Activated CD4-positive, alpha-beta T cell treated with anti-CD3 and anti-CD28 coated beads, Interleukin-2, amount 10 ng/mL, durations not matched to agents 7 days and 5 days (primary cell): ENCODE measurements at regions of chr1 and their contacts with region 1.

Region 1: DNA sequence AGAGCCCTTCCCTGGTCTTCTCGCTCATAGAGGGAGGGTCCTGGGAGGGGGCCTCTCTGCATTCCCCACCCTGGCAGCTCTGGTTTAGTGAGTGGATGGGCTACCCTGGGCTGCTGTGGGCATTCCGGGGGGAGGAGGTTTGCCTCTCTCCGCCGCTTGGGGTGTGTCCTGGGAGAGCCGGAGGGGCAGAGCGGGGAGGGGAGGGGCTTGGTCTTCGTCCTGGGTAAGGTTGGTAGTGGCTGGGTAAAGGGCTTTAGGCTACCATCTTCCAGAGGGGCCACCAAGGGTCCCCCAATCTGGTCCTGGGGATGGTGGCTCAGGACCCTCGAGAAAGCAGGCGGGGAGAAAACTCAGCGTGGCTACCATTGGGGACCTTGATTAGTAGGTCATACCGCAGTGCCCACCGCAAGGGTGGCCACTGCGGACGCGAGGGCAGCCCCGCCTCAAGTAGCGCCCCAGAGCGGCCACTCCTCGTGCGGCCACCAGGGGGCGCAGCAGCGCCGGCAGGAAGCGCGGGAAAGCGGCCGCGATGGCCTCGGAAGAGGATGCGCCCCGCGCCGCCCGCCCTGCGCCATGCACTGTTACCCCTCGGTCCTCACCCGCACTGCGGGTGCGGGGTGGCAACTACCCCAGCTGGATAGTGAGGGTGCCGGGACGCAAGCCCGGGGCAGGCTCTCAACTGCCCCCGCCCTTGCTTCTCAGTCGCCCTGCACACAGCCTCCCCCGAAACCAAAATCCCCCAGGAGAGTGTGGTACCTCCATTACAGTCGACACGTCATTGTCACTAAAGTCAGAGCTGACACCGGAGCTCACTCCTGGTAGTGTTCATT is 44.1 kb upstream of the SLC25A33 start:
- DNase-seq: peak; percentile 57
- H3K4me3 Mint-ChIP-seq: peak overlapping the region; percentile 44
- H3K27ac Mint-ChIP-seq: peak overlapping the region; percentile 61
- H3K4me1 Mint-ChIP-seq: peaks cover 12% of the 10 kb centered on the region
- H3K27me3 Mint-ChIP-seq: peaks cover 1% of the 10 kb centered on the region

Region 2: GRCh38 chr1:9269078-9269501 is 226.1 kb before region 1 on chr1:
- CTCF ChIA-PET with region 1: interaction called, 15 read pairs
- POLR2A ChIA-PET with region 1: no interaction called
- DNase-seq: no peak
- H3K4me3 Mint-ChIP-seq: no peak overlapping the region
- H3K27ac Mint-ChIP-seq: no peak overlapping the region
- H3K4me1 Mint-ChIP-seq: peaks cover 15% of the 10 kb centered on the region
- H3K27me3 Mint-ChIP-seq: no peaks in the 10 kb centered on the region

Region 3: DNA sequence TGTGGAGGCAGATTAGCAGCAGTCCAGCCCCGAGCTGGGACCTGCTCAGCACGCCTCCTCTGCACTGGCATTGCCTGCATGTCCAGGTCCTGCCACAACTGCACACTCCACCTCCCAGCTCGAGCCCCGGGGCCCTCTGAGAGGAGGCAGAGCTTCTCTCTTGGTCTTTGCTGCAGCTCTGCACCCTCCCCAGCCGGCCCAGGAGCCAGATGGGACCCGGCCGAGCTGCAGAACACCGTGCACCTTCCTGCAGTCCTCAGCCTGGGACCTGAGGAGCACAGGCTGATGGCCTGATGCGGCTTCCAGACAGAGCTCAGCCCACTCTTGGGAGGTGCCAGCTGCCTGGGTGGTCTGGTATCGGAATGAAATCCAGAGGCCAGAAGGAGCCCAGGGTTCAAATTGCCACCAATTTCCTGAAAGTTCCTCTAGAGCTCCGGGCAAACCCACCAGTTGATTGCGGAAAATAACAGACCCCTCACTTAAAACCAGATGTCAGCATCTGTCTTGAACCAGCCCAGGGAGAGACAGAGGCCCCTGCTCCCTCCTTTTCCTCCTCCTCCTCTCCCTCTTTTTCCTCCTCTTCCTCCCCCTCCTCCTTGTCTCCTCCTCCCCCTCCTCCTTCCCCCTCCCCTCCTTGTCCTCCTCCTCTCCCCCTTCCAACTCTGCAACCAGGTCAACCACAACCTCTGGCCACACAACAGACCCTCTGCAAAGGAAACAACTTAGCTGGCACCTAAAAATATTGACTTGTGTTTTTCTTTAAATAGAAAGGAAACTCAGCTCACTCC is 213.0 kb before region 1 on chr1:
- CTCF ChIA-PET with region 1: interaction called, 22 read pairs
- POLR2A ChIA-PET with region 1: no interaction called
- DNase-seq: no peak
- H3K4me3 Mint-ChIP-seq: no peak overlapping the region
- H3K27ac Mint-ChIP-seq: peak overlapping the region; percentile 91
- H3K4me1 Mint-ChIP-seq: peaks cover 73% of the 10 kb centered on the region
- H3K27me3 Mint-ChIP-seq: peaks cover 3% of the 10 kb centered on the region

Region 4: GRCh38 chr1:9289090-9289534 is 206.0 kb before region 1 on chr1:
- CTCF ChIA-PET with region 1: interaction called, 18 read pairs
- POLR2A ChIA-PET with region 1: interaction called, 4 read pairs
- DNase-seq: peak; percentile 87
- H3K4me3 Mint-ChIP-seq: no peak overlapping the region
- H3K27ac Mint-ChIP-seq: no peak overlapping the region
- H3K4me1 Mint-ChIP-seq: peaks cover 37% of the 10 kb centered on the region
- H3K27me3 Mint-ChIP-seq: no peaks in the 10 kb centered on the region

Region 5: GRCh38 chr1:9822490-9822889 is 327.3 kb after region 1 on chr1:
- CTCF ChIA-PET with region 1: no interaction called
- POLR2A ChIA-PET with region 1: no interaction called
- DNase-seq: no peak
- H3K4me3 Mint-ChIP-seq: peak overlapping the region; percentile 98
- H3K27ac Mint-ChIP-seq: peak overlapping the region; percentile 91
- H3K4me1 Mint-ChIP-seq: peaks cover 49% of the 10 kb centered on the region
- H3K27me3 Mint-ChIP-seq: peaks cover 3% of the 10 kb centered on the region